HepG2 (cell line): ENCODE measurements at regions of chr20 and their contacts with region 1.

Region 1: GRCh38 chr20:44210422-44211176 is at the start of gene OSER1:
- DNase-seq: peak; percentile 99
- ATAC-seq: peak; percentile 91
- H3K4me3 ChIP-seq: peak within 1 kb of the TSS; percentile 91 to 96 (median 92)
- H3K27ac ChIP-seq: peak within 1 kb of the TSS; percentile 87
- H3K4me1 ChIP-seq: peaks cover 53% of the 10 kb centered on the region
- H3K27me3 ChIP-seq: no peaks in the 10 kb centered on the region; a peak in 1 of 5 replicates
- CTCF ChIP-seq: peak; percentile 44
- EP300 ChIP-seq: peak; percentile 68
- POLR2A ChIP-seq: peak; percentile 93 to 95
- RAD21 ChIP-seq: peak; percentile 43; the same call in 1 of the 2 replicates
- total RNA-seq, gene OSER1: 71.2 and 92.8 TPM in 2 replicates

Region 2: GRCh38 chr20:43666376-43667328 is 543.9 kb before region 1 on chr20 and contains the start of gene MYBL2:
- CTCF ChIA-PET with region 1: no interaction called
- POLR2A ChIA-PET with region 1: no interaction called
- in situ Hi-C with region 1: no loop called
- intact Hi-C with region 1: loop called (anchors 10 kb)
- DNase-seq: peak; percentile 70
- ATAC-seq: peak; percentile 92
- H3K4me3 ChIP-seq: peak within 1 kb of the TSS; percentile 63 to 86 (median 70)
- H3K27ac ChIP-seq: no peak within 1 kb of the TSS
- H3K4me1 ChIP-seq: peaks cover 54% of the 10 kb centered on the region
- H3K27me3 ChIP-seq: no peaks in the 10 kb centered on the region; a peak in 1 of 5 replicates
- CTCF ChIP-seq: no peak
- EP300 ChIP-seq: no peak
- POLR2A ChIP-seq: peak; percentile 74 to 84
- RAD21 ChIP-seq: no peak
- total RNA-seq, gene MYBL2: 66.2 and 76.9 TPM in 2 replicates

Region 3: DNA sequence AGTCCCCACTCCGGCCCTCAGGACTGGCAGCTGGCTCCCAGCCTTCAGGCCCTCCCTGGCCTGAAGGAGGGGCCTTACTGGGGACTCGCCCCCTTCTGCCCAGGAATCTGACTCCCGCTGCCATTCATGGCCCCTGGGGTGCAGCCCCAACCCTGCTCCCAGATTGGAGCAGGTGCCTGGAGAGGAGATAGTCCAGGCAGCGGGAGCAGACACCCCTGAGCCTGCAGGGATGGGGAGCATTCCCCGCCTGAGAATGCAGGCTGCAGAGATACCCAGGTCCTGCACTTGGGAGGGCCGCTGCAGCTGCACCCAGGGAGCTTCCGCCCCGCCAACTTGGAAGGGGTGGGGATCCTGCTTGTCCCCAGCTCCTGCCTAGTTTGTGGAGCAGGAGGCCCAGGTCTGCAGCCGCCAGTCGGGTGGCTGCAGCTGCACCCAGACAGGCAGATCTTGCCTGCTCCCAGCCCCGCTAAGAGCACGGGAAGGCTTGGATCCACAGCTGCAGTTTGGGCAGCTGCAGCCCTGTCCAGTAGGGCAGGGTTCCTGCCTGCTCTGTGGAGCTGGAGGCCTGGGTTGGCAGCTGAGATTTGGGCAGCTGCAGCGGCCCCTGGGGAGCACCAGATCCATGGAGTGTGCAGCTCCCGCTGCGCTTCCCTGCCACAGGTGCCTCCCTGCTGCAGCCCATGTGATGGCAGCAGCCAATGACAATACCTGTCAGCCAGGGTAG is 489.0 kb before region 1 on chr20:
- CTCF ChIA-PET with region 1: no interaction called
- POLR2A ChIA-PET with region 1: no interaction called
- in situ Hi-C with region 1: no loop called
- intact Hi-C with region 1: loop called (anchors 10 kb)
- DNase-seq: no peak
- ATAC-seq: peak; percentile 54
- H3K4me3 ChIP-seq: peak overlapping the region in 2 of 3 experiments; percentile 7 to 40; a peak in 3 of 6 replicates
- H3K27ac ChIP-seq: no peak overlapping the region
- H3K4me1 ChIP-seq: peaks cover 38% of the 10 kb centered on the region
- H3K27me3 ChIP-seq: peaks cover 0 to 15% of the 10 kb centered on the region in 2 experiments; a peak in 1 of 5 replicates
- CTCF ChIP-seq: peak; percentile 37
- EP300 ChIP-seq: no peak
- POLR2A ChIP-seq: no peak
- RAD21 ChIP-seq: no peak

Region 4: DNA sequence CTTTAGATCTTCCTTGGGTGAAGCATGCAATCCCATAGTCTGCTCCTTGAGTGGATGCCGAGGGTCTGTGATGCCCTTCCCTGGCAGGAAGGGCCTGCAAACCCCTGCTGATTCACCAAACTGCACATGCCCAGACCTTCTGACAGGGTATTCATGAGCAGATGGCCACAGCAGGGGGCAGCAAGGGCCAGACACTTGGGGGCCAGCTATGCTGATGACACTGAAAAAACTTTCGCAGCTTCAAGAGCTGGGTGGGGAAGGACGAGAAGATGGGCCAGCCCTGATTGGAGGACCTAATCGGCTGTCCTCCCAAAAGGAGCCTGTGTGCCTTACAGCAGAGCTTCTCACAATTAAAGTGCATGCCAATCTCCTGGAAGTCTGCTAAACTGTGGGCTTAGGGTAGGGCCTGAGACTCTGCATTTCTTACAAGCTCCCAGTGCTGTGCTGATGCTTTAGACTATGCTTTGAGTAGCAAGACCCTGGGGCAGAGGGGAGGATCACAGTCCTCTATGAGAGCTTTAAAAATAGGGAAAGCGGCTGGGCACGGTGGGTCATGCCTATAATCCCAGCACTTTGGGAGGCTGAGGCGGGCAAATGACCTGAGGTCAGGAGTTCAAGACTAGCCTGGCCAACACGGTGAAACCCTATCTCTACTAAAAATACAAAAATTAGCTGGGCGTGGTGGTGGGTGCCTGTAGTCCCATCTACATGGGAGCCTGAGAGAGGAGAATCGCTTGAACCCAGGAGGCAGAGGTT is 21.3 kb after region 1 on chr20:
- CTCF ChIA-PET with region 1: no interaction called
- POLR2A ChIA-PET with region 1: no interaction called
- in situ Hi-C with region 1: no loop called
- intact Hi-C with region 1: no loop called
- DNase-seq: peak; percentile 49
- ATAC-seq: peak; percentile 73
- H3K4me3 ChIP-seq: no peak overlapping the region
- H3K27ac ChIP-seq: no peak overlapping the region
- H3K4me1 ChIP-seq: peaks cover 29% of the 10 kb centered on the region
- H3K27me3 ChIP-seq: no peaks in the 10 kb centered on the region; a peak in 1 of 5 replicates
- CTCF ChIP-seq: peak; percentile 75
- EP300 ChIP-seq: no peak
- POLR2A ChIP-seq: no peak
- RAD21 ChIP-seq: 0 out of 2 replicates have a peak, but pooled peaks have one; percentile 13

Region 5: DNA sequence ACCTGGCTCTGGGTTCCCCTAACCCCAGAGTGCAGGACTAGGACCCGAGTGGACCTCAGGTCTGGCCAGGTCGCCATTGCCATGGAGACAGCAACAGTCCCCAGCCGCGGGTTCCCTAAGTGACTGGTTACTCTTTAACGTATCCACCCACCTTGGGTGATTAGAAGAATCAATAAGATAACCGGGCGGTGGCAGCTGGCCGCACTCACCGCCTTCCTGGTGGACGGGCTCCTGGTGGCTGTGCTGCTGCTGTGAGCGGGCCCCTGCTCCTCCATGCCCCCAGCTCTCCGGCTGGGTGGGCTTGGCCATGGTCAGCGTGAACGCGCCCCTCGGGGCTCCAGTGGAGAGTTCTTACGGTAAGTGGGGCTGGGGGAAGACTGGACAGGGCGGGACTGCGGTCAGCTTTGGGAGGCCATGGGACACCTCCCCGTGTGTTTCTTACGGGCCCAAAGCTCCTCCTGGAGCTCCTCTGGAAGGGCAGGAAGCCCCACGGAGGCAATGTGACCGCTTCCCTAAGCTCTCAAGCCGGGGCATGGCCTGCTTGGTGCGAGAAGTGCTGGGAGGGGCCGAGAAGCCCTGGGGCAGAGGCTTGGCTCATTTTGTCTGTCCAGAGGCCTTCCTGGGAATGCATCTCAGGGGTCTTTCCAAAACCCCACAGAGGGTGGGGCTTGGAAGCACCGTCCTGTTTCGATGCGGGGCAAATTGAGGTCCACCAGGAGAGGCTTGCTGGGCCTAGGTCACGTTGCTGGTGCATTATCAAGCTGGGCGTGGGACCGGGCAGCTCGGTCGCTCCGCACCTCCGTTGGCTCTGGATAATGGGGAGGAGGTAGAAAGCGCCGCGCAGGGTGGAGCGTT is 145.1 kb after region 1 on chr20 and contains the start of gene HNF4A:
- CTCF ChIA-PET with region 1: no interaction called
- POLR2A ChIA-PET with region 1: no interaction called
- in situ Hi-C with region 1: no loop called
- intact Hi-C with region 1: loop called (anchors 1 kb)
- DNase-seq: peak; percentile 92
- ATAC-seq: peak; percentile 91
- H3K4me3 ChIP-seq: peak within 1 kb of the TSS; percentile 69 to 95 (median 92)
- H3K27ac ChIP-seq: peak within 1 kb of the TSS; percentile 73
- H3K4me1 ChIP-seq: peaks cover 76% of the 10 kb centered on the region
- H3K27me3 ChIP-seq: no peaks in the 10 kb centered on the region; a peak in 1 of 5 replicates
- CTCF ChIP-seq: peak; percentile 9; the same call in 1 of the 2 replicates
- EP300 ChIP-seq: peak in 1 of 2 experiments; percentile 50; a peak in 1 of 4 replicates
- POLR2A ChIP-seq: peak; percentile 85 to 98
- RAD21 ChIP-seq: peak; percentile 66
- total RNA-seq, gene HNF4A: 169 and 190 TPM in 2 replicates

Region 6: GRCh38 chr20:44683263-44684046 is 472.9 kb after region 1 on chr20:
- CTCF ChIA-PET with region 1: no interaction called
- POLR2A ChIA-PET with region 1: no interaction called
- in situ Hi-C with region 1: no loop called
- intact Hi-C with region 1: loop called (anchors 10 kb)
- DNase-seq: peak; percentile 63
- ATAC-seq: peak; percentile 80
- H3K4me3 ChIP-seq: no peak overlapping the region
- H3K27ac ChIP-seq: no peak overlapping the region
- H3K4me1 ChIP-seq: peaks cover 15% of the 10 kb centered on the region
- H3K27me3 ChIP-seq: peaks cover 0 to 3% of the 10 kb centered on the region in 2 experiments; a peak in 2 of 5 replicates
- CTCF ChIP-seq: peak; percentile 85
- EP300 ChIP-seq: no peak
- POLR2A ChIP-seq: no peak
- RAD21 ChIP-seq: peak; percentile 52; the same call in 1 of the 2 replicates

Region 7: GRCh38 chr20:44885392-44886265 is 675.0 kb after region 1 on chr20 and contains the start of gene YWHAB:
- CTCF ChIA-PET with region 1: no interaction called
- POLR2A ChIA-PET with region 1: no interaction called
- in situ Hi-C with region 1: no loop called
- intact Hi-C with region 1: loop called (anchors 10 kb)
- DNase-seq: peak; percentile 98
- ATAC-seq: peak; percentile 96
- H3K4me3 ChIP-seq: peak within 1 kb of the TSS; percentile 88 to 97 (median 92)
- H3K27ac ChIP-seq: peak within 1 kb of the TSS; percentile 91
- H3K4me1 ChIP-seq: peaks cover 60% of the 10 kb centered on the region
- H3K27me3 ChIP-seq: no peaks in the 10 kb centered on the region; a peak in 1 of 5 replicates
- CTCF ChIP-seq: peak; percentile 24
- EP300 ChIP-seq: peak in 1 of 2 experiments; percentile 66; a peak in 2 of 4 replicates
- POLR2A ChIP-seq: peak; percentile 64 to 75
- RAD21 ChIP-seq: peak; percentile 68
- total RNA-seq, gene YWHAB: 121 and 184 TPM in 2 replicates